PC-9 (cell line): ENCODE measurements at regions of chr5 and their contacts with region 1.

Region 1: DNA sequence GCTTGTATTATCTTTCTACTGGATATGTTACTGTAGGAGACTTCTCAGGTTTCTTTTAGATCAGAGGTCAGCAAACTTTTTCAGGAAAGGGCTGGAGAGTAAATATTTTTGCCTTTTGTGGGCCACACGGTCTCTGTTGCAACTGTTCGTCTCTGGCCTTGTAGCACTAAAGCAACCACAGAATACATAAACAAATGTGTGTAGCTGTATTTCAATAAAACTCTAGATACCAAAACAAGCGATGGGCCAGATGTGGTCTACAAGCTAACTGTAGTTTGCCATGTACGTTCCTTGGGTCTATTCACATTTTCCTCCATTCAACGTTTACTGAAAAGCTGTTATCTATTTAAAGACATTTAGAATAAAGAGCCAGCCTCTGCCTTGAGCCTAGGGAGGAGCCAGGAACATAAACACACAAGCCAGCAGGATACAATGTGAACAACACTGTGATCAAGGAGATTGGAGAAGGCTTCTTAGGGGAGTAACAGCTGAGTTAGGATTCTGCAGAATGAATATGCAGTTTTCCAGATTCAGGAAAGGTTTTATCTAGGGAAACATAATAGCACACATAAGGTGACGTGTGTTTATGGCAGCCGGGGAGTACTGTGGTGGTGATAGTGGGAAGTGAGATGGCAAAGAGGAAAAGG is 33.0 kb upstream of the HOMER1 start:
- DNase-seq: no peak
- H3K4me3 ChIP-seq: peak overlapping the region; percentile 44; the same call in 1 of the 2 replicates
- H3K27ac ChIP-seq: peak overlapping the region; percentile 76
- H3K4me1 ChIP-seq: peaks cover 48% of the 10 kb centered on the region
- H3K27me3 ChIP-seq: no peaks in the 10 kb centered on the region
- CTCF ChIP-seq: no peak

Region 2: GRCh38 chr5:79578872-79579271 is 32.0 kb after region 1 on chr5:
- CTCF ChIA-PET with region 1: no interaction called
- POLR2A ChIA-PET with region 1: no interaction called
- intact Hi-C with region 1: loop called (anchors 1 kb)
- DNase-seq: peak; percentile 52 to 88
- H3K4me3 ChIP-seq: peak overlapping the region; percentile 12; the same call in 1 of the 2 replicates
- H3K27ac ChIP-seq: peak overlapping the region; percentile 79
- H3K4me1 ChIP-seq: peaks cover 34% of the 10 kb centered on the region
- H3K27me3 ChIP-seq: no peaks in the 10 kb centered on the region
- CTCF ChIP-seq: no peak